ENCODE measurements at regions of chr3 and their contacts with region 1.

Region 1: GRCh38 chr3:16370872-16371740 is 106.1 kb downstream of the OXNAD1 start:
- DNase-seq: no peak
- H3K4me3 Mint-ChIP-seq: no peak overlapping the region
- H3K27ac Mint-ChIP-seq: no peak overlapping the region
- H3K4me1 Mint-ChIP-seq: peaks cover 12% of the 10 kb centered on the region
- H3K27me3 Mint-ChIP-seq: no peaks in the 10 kb centered on the region
- CTCF ChIP-seq: no peak

Region 2: DNA sequence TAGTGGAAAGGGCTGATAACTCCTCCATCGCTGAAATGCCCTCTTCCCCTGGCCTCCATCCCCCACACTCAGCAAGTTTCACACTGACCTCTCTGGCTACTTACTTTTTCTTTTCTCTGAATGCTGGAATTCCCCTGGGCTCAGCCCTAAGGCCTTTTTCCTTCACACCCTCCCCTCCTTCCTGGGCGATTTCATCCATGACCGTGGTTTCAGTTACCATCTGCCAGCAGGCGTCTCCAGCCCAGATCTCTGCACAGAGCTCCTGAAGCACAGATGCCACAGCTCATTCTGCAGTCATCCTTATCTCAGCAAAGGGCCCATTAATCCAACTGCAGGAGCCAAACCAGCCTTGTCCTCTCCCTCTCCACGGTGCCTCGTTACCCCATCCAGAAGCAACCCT is 28.4 kb after region 1 on chr3:
- CTCF ChIA-PET with region 1: interaction called, 7 read pairs
- POLR2A ChIA-PET with region 1: interaction called, 4 read pairs
- intact Hi-C with region 1: loop called (anchors 1 kb)
- DNase-seq: peak; percentile 43
- H3K4me3 Mint-ChIP-seq: no peak overlapping the region
- H3K27ac Mint-ChIP-seq: no peak overlapping the region
- H3K4me1 Mint-ChIP-seq: peaks cover 21% of the 10 kb centered on the region
- H3K27me3 Mint-ChIP-seq: no peaks in the 10 kb centered on the region
- CTCF ChIP-seq: no peak

Measured in MCF 10A (cell line).